Caco-2 (cell line): ENCODE measurements at regions of chr10 and their contacts with region 1.

Region 1: DNA sequence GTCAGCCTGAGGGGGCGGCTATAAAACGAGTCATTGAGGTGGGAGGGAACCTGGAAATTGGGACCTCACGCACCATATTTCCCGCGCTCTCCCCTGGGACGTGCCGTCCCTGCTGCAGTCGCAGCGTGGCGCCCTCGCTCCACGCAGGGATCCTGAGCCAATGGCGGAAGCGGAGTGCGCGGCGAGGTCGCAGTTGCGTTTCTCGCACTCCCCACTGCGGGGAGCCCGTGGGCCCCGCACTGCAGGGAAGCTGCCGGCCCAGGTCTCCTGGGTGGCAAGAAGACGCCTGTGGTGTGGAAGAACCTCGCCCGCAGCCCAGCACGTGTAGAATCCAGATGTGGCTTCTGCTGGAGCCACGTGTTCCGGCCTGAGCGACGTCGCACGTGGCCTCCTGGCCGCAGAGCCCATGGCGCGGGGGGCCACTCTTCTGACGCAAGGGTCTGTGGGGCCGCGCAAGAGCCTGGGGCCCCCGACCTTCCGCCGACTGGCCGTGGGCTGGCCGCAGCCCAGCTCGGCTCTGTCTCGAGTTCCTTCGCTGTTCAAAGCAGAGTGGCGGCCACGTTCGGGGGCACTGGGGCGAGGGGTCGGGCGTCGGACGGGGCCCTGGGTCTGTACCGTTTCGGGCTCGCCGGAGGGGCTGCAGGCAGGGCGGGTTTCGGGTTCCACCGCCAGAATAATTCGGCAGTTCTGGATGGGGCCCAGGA is 26.4 kb downstream of the HIF1AN start:
- DNase-seq: peak; percentile 83 to 92
- H3K4me3 ChIP-seq: peak overlapping the region; percentile 6; the same call in 1 of the 2 replicates
- H3K4me3 Mint-ChIP-seq: peak overlapping the region; percentile 12
- H3K27ac Mint-ChIP-seq: no peak overlapping the region
- H3K4me1 ChIP-seq: peaks cover 11% of the 10 kb centered on the region
- H3K4me1 Mint-ChIP-seq: peaks cover 6% of the 10 kb centered on the region
- H3K27me3 ChIP-seq: no peaks in the 10 kb centered on the region
- H3K27me3 Mint-ChIP-seq: peaks cover 5% of the 10 kb centered on the region
- CTCF ChIP-seq: peak; percentile 97 to 100

Region 2: GRCh38 chr10:100728928-100729861 is 167.0 kb after region 1 on chr10:
- CTCF ChIA-PET with region 1: interaction called, 4 read pairs
- POLR2A ChIA-PET with region 1: no interaction called
- intact Hi-C with region 1: loop called (anchors 1 kb)
- DNase-seq: peak; percentile 83 to 86
- H3K4me3 ChIP-seq: peak overlapping the region; percentile 48
- H3K4me3 Mint-ChIP-seq: peak overlapping the region; percentile 79
- H3K27ac Mint-ChIP-seq: no peak overlapping the region
- H3K4me1 ChIP-seq: peaks cover 32% of the 10 kb centered on the region
- H3K4me1 Mint-ChIP-seq: peaks cover 28% of the 10 kb centered on the region
- H3K27me3 ChIP-seq: no peaks in the 10 kb centered on the region
- H3K27me3 Mint-ChIP-seq: peaks cover 3% of the 10 kb centered on the region
- CTCF ChIP-seq: peak; percentile 60 to 85

Region 3: DNA sequence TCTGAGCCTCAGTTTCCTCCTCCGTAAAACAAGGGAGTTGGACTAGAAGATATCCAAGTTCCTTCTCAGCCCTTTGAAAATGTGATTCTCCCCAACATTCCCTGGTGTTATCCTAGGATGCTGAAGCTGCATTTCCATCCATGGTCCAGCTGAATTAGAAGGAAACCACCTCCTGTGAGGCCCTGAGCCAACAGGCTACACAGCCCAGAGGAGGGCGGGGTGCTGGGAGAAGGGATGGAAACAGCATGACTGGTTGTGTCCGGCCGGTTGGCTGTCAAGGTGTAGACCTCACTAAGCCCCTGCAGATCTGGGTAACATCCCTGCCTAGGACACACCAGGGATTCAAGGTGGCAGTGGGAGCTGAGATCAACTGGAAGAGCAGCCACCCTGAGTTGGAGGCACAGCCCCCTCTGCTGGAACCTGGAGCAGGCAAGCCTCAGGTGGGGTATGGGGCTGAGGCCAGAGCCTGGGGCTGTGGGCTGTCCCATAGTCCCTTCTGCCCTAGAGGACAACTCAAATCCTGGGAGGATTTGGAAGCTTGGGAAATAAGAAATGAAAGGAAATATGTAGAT is 255.2 kb after region 1 on chr10:
- CTCF ChIA-PET with region 1: no interaction called
- POLR2A ChIA-PET with region 1: no interaction called
- intact Hi-C with region 1: loop called (anchors 1 kb)
- DNase-seq: peak in 1 of 2 experiments; percentile 42
- H3K4me3 ChIP-seq: no peak overlapping the region
- H3K4me3 Mint-ChIP-seq: no peak overlapping the region
- H3K27ac Mint-ChIP-seq: no peak overlapping the region
- H3K4me1 ChIP-seq: no peaks in the 10 kb centered on the region
- H3K4me1 Mint-ChIP-seq: no peaks in the 10 kb centered on the region
- H3K27me3 ChIP-seq: no peaks in the 10 kb centered on the region
- H3K27me3 Mint-ChIP-seq: peaks cover 17% of the 10 kb centered on the region
- CTCF ChIP-seq: peak; percentile 34 to 74

Region 4: DNA sequence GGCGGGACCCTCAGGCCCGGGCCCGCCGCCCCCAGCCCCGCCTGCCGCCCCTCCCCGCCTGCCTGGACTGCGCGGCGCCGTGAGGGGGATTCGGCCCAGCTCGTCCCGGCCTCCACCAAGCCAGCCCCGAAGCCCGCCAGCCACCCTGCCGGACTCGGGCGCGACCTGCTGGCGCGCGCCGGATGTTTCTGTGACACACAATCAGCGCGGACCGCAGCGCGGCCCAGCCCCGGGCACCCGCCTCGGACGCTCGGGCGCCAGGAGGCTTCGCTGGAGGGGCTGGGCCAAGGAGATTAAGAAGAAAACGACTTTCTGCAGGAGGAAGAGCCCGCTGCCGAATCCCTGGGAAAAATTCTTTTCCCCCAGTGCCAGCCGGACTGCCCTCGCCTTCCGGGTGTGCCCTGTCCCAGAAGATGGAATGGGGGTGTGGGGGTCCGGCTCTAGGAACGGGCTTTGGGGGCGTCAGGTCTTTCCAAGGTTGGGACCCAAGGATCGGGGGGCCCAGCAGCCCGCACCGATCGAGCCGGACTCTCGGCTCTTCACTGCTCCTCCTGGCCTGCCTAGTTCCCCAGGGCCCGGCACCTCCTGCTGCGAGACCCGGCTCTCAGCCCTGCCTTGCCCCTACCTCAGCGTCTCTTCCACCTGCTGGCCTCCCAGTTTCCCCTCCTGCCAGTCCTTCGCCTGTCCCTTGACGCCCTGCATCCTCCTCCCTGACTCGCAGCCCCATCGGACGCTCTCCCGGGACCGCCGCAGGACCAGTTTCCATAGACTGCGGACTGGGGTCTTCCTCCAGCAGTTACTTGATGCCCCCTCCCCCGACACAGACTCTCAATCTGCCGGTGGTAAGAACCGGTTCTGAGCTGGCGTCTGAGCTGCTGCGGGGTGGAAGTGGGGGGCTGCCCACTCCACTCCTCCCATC is 265.9 kb after region 1 on chr10:
- CTCF ChIA-PET with region 1: interaction called, 3 read pairs
- POLR2A ChIA-PET with region 1: no interaction called
- intact Hi-C with region 1: loop called (anchors 2 kb)
- DNase-seq: peak; percentile 61 to 79
- H3K4me3 ChIP-seq: peak overlapping the region; percentile 77
- H3K4me3 Mint-ChIP-seq: peak overlapping the region; percentile 80
- H3K27ac Mint-ChIP-seq: no peak overlapping the region
- H3K4me1 ChIP-seq: peaks cover 10% of the 10 kb centered on the region; the same call in 1 of the 2 replicates
- H3K4me1 Mint-ChIP-seq: peaks cover 10% of the 10 kb centered on the region
- H3K27me3 ChIP-seq: peaks cover 5% of the 10 kb centered on the region; the same call in 1 of the 2 replicates
- H3K27me3 Mint-ChIP-seq: peaks cover 33% of the 10 kb centered on the region
- CTCF ChIP-seq: peak in 1 of 2 experiments; percentile 57

Region 5: GRCh38 chr10:101012525-101013364 is 450.6 kb after region 1 on chr10:
- CTCF ChIA-PET with region 1: no interaction called
- POLR2A ChIA-PET with region 1: no interaction called
- intact Hi-C with region 1: loop called (anchors 5 kb)
- DNase-seq: peak; percentile 84 to 85
- H3K4me3 ChIP-seq: no peak overlapping the region
- H3K4me3 Mint-ChIP-seq: no peak overlapping the region
- H3K27ac Mint-ChIP-seq: peak overlapping the region; percentile 2
- H3K4me1 ChIP-seq: no peaks in the 10 kb centered on the region
- H3K4me1 Mint-ChIP-seq: peaks cover 15% of the 10 kb centered on the region
- H3K27me3 ChIP-seq: no peaks in the 10 kb centered on the region
- H3K27me3 Mint-ChIP-seq: no peaks in the 10 kb centered on the region
- CTCF ChIP-seq: peak; percentile 72 to 84